ENCODE measurements at regions of chr18 and their contacts with region 1.

Region 1: GRCh38 chr18:76459687-76460350 is 35.2 kb downstream of the ZNF516 start:
- DNase-seq: peak; percentile 98
- H3K4me3 Mint-ChIP-seq: peak overlapping the region; percentile 61
- H3K27ac Mint-ChIP-seq: peak overlapping the region; percentile 65
- H3K4me1 Mint-ChIP-seq: peaks cover 22% of the 10 kb centered on the region
- H3K27me3 Mint-ChIP-seq: no peaks in the 10 kb centered on the region
- CTCF ChIP-seq: no peak

Region 2: GRCh38 chr18:75984853-75985252 is 475.0 kb before region 1 on chr18:
- CTCF ChIA-PET with region 1: no interaction called
- POLR2A ChIA-PET with region 1: no interaction called
- intact Hi-C with region 1: no loop called
- DNase-seq: no peak
- H3K4me3 Mint-ChIP-seq: no peak overlapping the region
- H3K27ac Mint-ChIP-seq: no peak overlapping the region
- H3K4me1 Mint-ChIP-seq: no peaks in the 10 kb centered on the region
- H3K27me3 Mint-ChIP-seq: no peaks in the 10 kb centered on the region
- CTCF ChIP-seq: no peak

Region 3: DNA sequence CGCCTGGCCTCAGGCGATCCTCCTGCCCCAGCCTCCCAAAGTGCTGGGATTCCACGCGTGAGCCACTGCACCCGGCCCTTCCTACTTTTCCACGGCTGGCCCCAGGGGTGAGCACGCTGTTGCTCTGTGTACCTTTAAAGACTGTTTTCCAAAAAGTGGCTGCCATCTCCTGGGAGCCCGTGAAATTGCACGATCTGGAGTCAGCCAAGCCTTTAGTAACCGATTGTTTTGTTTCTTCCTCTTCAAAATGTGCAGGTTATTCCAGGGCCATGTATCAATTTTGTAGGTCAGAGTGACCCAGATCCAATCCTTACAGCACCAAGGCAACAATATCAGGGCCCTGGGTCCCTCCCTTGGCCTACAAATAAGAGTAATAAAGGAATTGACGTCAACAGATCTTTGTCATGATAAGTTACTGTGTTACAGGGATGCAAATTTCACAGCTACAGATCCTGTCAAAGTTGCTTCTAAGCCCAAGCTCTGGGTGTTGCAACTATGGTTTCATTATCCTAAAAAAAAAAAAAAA is 227.0 kb after region 1 on chr18:
- CTCF ChIA-PET with region 1: interaction called, 9 read pairs
- POLR2A ChIA-PET with region 1: interaction called, 3 read pairs
- intact Hi-C with region 1: loop called (anchors 1 kb)
- DNase-seq: peak; percentile 75
- H3K4me3 Mint-ChIP-seq: no peak overlapping the region
- H3K27ac Mint-ChIP-seq: peak overlapping the region; percentile 47
- H3K4me1 Mint-ChIP-seq: peaks cover 7% of the 10 kb centered on the region
- H3K27me3 Mint-ChIP-seq: no peaks in the 10 kb centered on the region
- CTCF ChIP-seq: peak; percentile 73

Measured in MCF 10A (cell line).